ENCODE measurements at regions of chr1 and their contacts with region 1.

Region 1: DNA sequence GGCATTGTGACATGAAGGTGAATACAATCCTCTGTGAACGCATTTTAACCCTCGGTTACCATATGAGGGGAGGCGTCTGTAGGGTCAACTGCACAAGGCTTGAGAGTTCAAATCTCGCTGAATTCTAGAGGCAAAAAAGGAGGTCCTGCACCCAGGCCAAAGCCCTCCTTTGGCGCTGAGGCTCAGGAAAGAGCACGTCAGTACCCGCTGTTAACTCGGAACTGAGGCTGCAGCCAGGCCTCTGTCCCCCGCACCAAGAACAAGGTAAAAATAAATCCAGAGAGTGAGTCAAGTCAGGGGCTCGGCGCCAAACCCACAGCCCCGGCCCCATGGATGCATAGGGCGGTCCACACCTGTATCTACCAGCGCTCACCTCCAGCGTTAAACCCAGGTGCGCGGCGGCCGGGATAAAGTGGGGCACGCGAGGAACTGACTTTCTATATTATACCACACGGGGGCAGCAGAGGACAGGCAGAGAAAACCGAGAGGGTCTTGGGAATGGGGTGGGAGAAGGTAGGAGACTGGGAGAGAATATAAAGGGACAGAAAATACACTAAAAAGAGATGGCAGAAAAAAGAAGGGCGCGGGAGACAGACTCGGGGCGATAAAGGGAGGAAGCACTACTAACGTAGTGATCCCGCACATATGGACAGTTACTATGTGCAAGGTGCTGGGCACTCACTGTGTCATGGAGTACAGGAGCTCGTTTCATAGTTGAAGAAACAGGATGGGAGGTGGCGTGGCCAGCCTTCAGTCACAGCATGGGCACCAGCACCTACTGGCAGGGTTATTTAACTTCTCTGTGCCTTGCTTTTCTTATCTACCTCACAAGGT is 54.8 kb downstream of the DMRTA2 start:
- DNase-seq: peak; percentile 56
- ATAC-seq: peak; percentile 45
- H3K4me3 Mint-ChIP-seq: no peak overlapping the region
- H3K27ac Mint-ChIP-seq: no peak overlapping the region
- H3K4me1 Mint-ChIP-seq: no peaks in the 10 kb centered on the region
- H3K27me3 Mint-ChIP-seq: peaks cover 29% of the 10 kb centered on the region
- CTCF ChIP-seq: peak; percentile 93

Region 2: DNA sequence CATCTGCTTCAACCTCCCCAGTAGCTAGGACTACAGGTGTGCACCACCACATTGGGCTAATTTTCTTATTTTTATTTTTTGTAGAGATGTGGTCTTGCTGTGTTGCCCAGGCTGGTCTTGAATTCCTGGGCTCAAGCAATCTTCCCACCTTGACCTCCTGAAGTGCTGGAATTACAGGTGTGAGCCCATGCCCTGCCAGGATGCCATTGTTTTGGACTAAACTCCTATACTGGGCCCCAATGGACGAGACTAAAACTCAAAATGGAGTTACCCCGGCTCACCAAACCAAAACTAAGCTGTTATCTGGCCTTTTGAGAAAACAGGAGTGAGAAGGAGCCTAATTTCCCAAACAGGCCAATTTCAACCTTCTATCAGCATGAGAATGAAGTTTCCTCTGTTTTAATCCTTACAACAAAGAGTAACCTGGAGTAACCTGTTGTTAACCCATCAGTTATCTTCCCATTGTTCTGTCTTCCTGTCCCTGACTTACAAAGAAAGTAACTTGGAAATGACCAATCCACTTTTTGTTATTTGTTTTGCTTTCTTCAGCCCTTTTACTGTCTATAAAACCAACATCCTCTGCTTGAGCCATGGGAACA is 25.2 kb after region 1 on chr1:
- CTCF ChIA-PET with region 1: no interaction called
- POLR2A ChIA-PET with region 1: no interaction called
- intact Hi-C with region 1: no loop called
- DNase-seq: no peak
- ATAC-seq: no peak
- H3K4me3 Mint-ChIP-seq: no peak overlapping the region
- H3K27ac Mint-ChIP-seq: no peak overlapping the region
- H3K4me1 Mint-ChIP-seq: no peaks in the 10 kb centered on the region
- H3K27me3 Mint-ChIP-seq: peaks cover 17% of the 10 kb centered on the region
- CTCF ChIP-seq: no peak

Region 3: GRCh38 chr1:50562106-50562505 is 193.7 kb after region 1 on chr1:
- CTCF ChIA-PET with region 1: no interaction called
- POLR2A ChIA-PET with region 1: no interaction called
- intact Hi-C with region 1: no loop called
- DNase-seq: no peak
- ATAC-seq: no peak
- H3K4me3 Mint-ChIP-seq: no peak overlapping the region
- H3K27ac Mint-ChIP-seq: no peak overlapping the region
- H3K4me1 Mint-ChIP-seq: no peaks in the 10 kb centered on the region
- H3K27me3 Mint-ChIP-seq: no peaks in the 10 kb centered on the region
- CTCF ChIP-seq: no peak

Region 4: DNA sequence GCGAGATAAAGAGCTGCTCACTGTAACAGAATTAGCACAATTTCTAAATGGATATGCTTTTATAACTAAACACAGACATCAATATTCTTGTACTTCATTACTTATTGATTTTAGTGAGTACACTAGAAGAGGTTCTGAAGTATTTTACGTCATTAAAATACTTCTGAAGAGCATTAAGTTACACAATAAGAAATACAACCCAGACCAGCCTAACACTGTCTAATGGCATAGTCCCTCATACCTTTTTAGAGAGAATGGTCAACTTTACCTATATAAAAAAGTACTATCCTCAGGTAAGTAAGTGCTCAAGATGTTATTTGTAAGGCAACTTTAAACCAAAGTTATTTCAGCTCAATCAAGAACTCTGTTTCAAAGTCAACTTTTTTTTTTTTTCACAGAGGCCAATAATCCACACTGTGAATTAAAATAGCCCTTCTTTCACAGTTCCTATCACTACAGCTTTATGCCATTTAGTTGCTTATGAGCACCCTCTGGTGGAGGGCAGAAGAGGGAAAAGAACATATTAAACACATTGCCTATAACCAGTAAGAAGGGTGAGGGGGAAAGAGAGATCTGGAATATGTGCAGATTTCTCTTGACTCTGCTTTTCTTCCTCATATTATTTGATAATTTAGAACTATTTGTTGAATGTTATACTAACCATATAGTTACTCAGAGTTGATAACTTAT is 236.9 kb after region 1 on chr1:
- CTCF ChIA-PET with region 1: interaction called, 4 read pairs
- POLR2A ChIA-PET with region 1: no interaction called
- intact Hi-C with region 1: loop called (anchors 2 kb)
- DNase-seq: peak; percentile 33
- ATAC-seq: no peak
- H3K4me3 Mint-ChIP-seq: no peak overlapping the region
- H3K27ac Mint-ChIP-seq: no peak overlapping the region
- H3K4me1 Mint-ChIP-seq: no peaks in the 10 kb centered on the region
- H3K27me3 Mint-ChIP-seq: no peaks in the 10 kb centered on the region
- CTCF ChIP-seq: peak; percentile 41

Region 5: DNA sequence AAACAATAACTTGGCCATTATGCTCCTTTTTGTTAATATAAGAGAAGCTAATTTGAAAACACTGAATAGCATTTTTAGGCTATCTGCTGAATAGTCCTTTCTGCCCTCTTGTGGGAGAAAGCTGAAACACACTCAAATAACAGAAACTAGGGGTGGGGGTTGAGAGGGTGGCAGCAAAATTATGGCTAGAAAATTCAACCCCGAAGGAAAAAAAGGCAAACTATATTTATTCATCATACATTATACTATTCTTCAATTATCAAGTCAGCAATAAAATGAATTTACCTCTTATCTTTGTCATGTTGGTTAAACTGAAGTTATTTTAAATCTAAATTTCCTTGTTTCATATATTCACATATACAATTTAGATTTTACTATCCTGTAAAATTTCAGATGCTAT is 335.7 kb after region 1 on chr1:
- CTCF ChIA-PET with region 1: interaction called, 4 read pairs
- POLR2A ChIA-PET with region 1: no interaction called
- intact Hi-C with region 1: loop called (anchors 2 kb)
- DNase-seq: peak; percentile 11
- ATAC-seq: peak; percentile 34
- H3K4me3 Mint-ChIP-seq: no peak overlapping the region
- H3K27ac Mint-ChIP-seq: no peak overlapping the region
- H3K4me1 Mint-ChIP-seq: peaks cover 9% of the 10 kb centered on the region
- H3K27me3 Mint-ChIP-seq: no peaks in the 10 kb centered on the region
- CTCF ChIP-seq: peak; percentile 70

Region 6: GRCh38 chr1:50852889-50853288 is 484.5 kb after region 1 on chr1:
- CTCF ChIA-PET with region 1: no interaction called
- POLR2A ChIA-PET with region 1: no interaction called
- intact Hi-C with region 1: no loop called
- DNase-seq: no peak
- ATAC-seq: no peak
- H3K4me3 Mint-ChIP-seq: no peak overlapping the region
- H3K27ac Mint-ChIP-seq: no peak overlapping the region
- H3K4me1 Mint-ChIP-seq: peaks cover 5% of the 10 kb centered on the region
- H3K27me3 Mint-ChIP-seq: no peaks in the 10 kb centered on the region
- CTCF ChIP-seq: no peak